ENCODE measurements at regions of chr19 and their contacts with region 1.

Region 1: GRCh38 chr19:662962-663681 is at the start of gene RNF126:
- H3K4me3 Mint-ChIP-seq: peak within 1 kb of the TSS; percentile 89
- H3K27ac Mint-ChIP-seq: peak within 1 kb of the TSS; percentile 90
- H3K4me1 Mint-ChIP-seq: peaks cover 71% of the 10 kb centered on the region
- H3K27me3 Mint-ChIP-seq: no peaks in the 10 kb centered on the region

Region 2: GRCh38 chr19:389255-389934 is 273.7 kb before region 1 on chr19:
- intact Hi-C with region 1: no loop called
- H3K4me3 Mint-ChIP-seq: no peak overlapping the region
- H3K27ac Mint-ChIP-seq: no peak overlapping the region
- H3K4me1 Mint-ChIP-seq: no peaks in the 10 kb centered on the region
- H3K27me3 Mint-ChIP-seq: peaks cover 32% of the 10 kb centered on the region

Region 3: DNA sequence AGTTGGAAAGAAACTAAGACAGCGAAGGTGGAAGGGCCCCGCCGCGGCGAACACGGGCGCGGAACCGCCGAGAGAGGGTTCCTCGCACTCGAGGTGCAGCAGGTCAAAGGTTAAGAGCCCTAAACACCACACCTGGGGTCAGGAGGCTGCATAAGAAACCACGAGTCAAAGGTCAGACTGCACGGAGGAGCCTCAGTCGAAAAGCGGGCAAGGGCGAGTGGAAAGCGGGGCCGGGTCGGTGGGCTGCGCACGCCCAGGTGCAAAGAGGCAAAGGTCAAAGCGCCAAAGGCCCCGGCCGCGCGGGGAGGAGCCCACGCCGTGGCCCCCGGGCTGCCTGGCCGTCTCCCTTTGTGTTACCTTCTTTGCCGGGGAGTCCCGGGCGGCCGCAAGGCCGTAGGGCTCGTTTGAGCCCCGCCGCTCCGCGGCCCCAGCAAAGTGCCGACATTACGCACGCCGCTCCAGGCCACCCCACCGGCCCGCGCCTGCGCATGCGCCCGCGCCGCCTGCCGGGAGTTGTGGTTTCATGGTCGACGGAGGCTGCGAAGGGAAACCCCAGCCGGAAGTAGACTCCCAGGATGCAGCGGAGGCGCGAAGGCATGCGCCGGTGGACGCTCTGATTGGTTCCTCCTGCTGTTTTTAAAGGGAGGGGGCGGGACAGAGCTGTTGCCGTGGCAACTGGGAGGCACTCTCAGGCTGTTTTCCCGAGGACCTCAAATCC is 29.9 kb before region 1 on chr19 and contains the start of gene POLRMT:
- intact Hi-C with region 1: loop called (anchors 2 kb)
- H3K4me3 Mint-ChIP-seq: peak within 1 kb of the TSS; percentile 97
- H3K27ac Mint-ChIP-seq: peak within 1 kb of the TSS; percentile 88
- H3K4me1 Mint-ChIP-seq: peaks cover 37% of the 10 kb centered on the region
- H3K27me3 Mint-ChIP-seq: peaks cover 18% of the 10 kb centered on the region

Region 4: GRCh38 chr19:680287-681028 is 17.3 kb after region 1 on chr19:
- intact Hi-C with region 1: loop called (anchors 1 kb)
- H3K4me3 Mint-ChIP-seq: peak overlapping the region; percentile 94
- H3K27ac Mint-ChIP-seq: peak overlapping the region; percentile 98
- H3K4me1 Mint-ChIP-seq: peaks cover 35% of the 10 kb centered on the region
- H3K27me3 Mint-ChIP-seq: peaks cover 32% of the 10 kb centered on the region

Region 5: DNA sequence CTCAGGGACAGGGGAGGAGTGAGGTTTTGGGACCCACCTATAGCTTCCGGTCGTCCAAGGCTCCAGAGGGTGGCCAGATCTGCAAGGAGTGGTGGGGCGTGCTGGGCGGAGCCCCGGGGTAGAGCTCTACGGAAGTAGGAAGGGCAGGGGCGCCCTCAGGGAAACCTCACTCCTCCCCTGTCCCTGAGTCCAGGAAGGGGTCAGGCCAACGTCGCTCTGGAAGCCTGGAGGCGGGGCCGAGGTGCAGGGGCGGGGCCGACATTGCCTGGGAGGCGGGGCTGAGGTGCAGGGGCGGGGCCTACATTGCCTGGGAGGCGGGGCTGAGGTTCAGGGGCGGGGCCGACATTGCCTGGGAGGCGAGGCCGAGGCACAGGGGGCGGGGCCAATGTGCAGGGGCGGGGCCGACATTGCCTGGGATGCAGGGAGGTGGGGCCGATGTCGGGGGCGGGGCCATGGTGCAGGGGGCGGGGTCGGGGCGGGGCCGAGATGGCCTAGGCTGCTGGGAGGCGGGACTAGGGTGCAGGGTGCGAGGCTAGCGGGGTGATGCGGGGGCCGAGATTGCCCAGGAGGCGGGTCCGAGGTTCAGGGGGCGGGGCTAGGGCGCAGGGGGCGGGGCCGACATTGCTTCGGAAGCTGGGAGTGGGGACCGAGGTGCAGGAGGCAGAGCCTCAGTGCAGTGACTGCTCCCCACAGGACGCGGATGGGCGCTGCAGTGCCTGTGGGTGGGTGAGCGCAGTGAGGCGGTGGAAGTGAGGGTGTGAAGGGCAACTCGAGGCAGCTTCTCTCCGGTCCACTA is 40.7 kb after region 1 on chr19:
- intact Hi-C with region 1: no loop called
- H3K4me3 Mint-ChIP-seq: peak overlapping the region; percentile 92
- H3K27ac Mint-ChIP-seq: peak overlapping the region; percentile 85
- H3K4me1 Mint-ChIP-seq: peaks cover 38% of the 10 kb centered on the region
- H3K27me3 Mint-ChIP-seq: peaks cover 21% of the 10 kb centered on the region

Region 6: GRCh38 chr19:732148-733069 is 69.3 kb after region 1 on chr19:
- intact Hi-C with region 1: loop called (anchors 1 kb)
- H3K4me3 Mint-ChIP-seq: no peak overlapping the region
- H3K27ac Mint-ChIP-seq: no peak overlapping the region
- H3K4me1 Mint-ChIP-seq: peaks cover 17% of the 10 kb centered on the region
- H3K27me3 Mint-ChIP-seq: peaks cover 20% of the 10 kb centered on the region

Region 7: DNA sequence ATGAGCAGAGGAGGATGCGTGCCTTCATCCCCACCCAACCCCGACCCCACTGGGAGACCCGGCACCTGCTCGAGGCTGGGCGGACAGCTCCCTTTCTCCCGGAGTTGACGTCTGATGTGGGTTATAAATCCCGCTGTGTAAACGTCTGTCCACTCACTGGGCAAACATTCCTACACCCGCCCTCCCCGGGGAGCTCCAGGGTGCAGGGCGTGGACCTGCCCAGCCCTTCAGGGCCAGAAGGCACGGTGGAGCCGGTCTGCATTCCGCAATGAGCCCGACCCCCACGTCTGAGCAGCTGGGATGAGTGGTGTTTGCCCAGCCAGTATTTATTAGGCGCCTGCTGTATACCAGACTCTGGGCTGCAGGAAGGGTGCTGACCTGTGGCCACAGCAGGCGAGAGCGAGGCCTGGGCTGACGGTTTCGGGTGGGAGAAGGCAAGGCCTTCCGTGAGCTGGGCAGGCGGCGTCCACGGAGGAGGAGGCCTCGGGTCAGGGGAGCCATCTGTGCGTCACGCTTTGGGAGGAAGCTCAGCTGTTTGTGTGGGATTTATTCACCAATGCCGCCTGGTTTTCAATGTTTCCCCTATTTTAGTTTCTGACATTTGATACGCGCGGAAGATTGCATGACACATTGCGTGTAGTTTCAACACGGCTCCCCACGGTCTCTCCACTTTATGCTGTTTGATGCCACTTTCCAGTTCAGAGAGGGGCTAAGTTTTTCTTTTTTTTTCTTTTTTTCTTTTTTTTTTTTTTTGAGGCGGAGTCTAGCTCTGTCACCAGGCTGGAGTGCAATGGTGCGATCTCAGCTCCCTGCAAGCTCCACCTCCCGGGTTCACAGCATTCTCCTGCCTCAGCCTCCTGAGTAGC is 89.8 kb after region 1 on chr19:
- intact Hi-C with region 1: loop called (anchors 5 kb)
- H3K4me3 Mint-ChIP-seq: peak overlapping the region; percentile 48
- H3K27ac Mint-ChIP-seq: peak overlapping the region; percentile 83
- H3K4me1 Mint-ChIP-seq: peaks cover 22% of the 10 kb centered on the region
- H3K27me3 Mint-ChIP-seq: peaks cover 25% of the 10 kb centered on the region

Measured in dendritic cell treated with granulocyte-macrophage colony-stimulating factor and Interleukin-4, amounts not matched to agents 40 ng/mL and 50 ng/mL, for 4 days (primary cell).